Aorta (tissue), 5 donors: ENCODE measurements at regions of chr2 and their contacts with region 1.

Region 1: GRCh38 chr2:96353032-96353561 is 17.5 kb downstream of the NCAPH start:
- DNase-seq: peak in 1 of 2 donors; percentile 63
- ATAC-seq: peak; percentile 79
- H3K4me3 ChIP-seq: no peak overlapping the region
- H3K27ac ChIP-seq: peak overlapping the region in 1 of 2 donors; percentile 74
- H3K4me1 ChIP-seq: peaks cover 0 to 2% of the 10 kb centered on the region in 2 donors
- H3K27me3 ChIP-seq: no peaks in the 10 kb centered on the region

Region 2: GRCh38 chr2:96305091-96305978 is 47.8 kb before region 1 on chr2 and contains the start of gene SNRNP200:
- intact Hi-C with region 1: loop called in 1 of 2 experiments (anchors 5 kb)
- DNase-seq: peak; percentile 92 to 95
- ATAC-seq: peak; percentile 97
- H3K4me3 ChIP-seq: peak within 1 kb of the TSS; percentile 53 to 74
- H3K27ac ChIP-seq: peak within 1 kb of the TSS in 1 of 2 donors; percentile 55
- H3K4me1 ChIP-seq: no peaks in the 10 kb centered on the region
- H3K27me3 ChIP-seq: no peaks in the 10 kb centered on the region
- total RNA-seq, gene SNRNP200: 85.0 to 99.7 TPM

Region 3: GRCh38 chr2:96407041-96407918 is 54.2 kb after region 1 on chr2:
- intact Hi-C with region 1: loop called in 1 of 2 experiments (anchors 5 kb)
- DNase-seq: peak; percentile 64 to 78
- ATAC-seq: peak; percentile 69
- H3K4me3 ChIP-seq: no peak overlapping the region
- H3K27ac ChIP-seq: no peak overlapping the region
- H3K4me1 ChIP-seq: peaks cover 0 to 4% of the 10 kb centered on the region in 2 donors
- H3K27me3 ChIP-seq: no peaks in the 10 kb centered on the region